Heart right ventricle (tissue), 16 donors: ENCODE measurements at regions of chr6 and their contacts with region 1.

Region 1: GRCh38 chr6:45486736-45487135 is 109.0 kb upstream of the SUPT3H start:
- DNase-seq: no peak
- ATAC-seq: no peak
- H3K4me3 ChIP-seq: no peak overlapping the region
- H3K27ac ChIP-seq: no peak overlapping the region
- H3K4me1 ChIP-seq: peaks cover 0 to 14% (median 0%) of the 10 kb centered on the region in 9 donors
- H3K27me3 ChIP-seq: no peaks in the 10 kb centered on the region
- CTCF ChIP-seq: no peak

Region 2: GRCh38 chr6:45502436-45502835 is 15.7 kb after region 1 on chr6:
- intact Hi-C with region 1: loop called in 1 of 10 experiments (anchors 2 kb)
- DNase-seq: no peak
- ATAC-seq: no peak
- H3K4me3 ChIP-seq: no peak overlapping the region
- H3K27ac ChIP-seq: no peak overlapping the region
- H3K4me1 ChIP-seq: peaks cover 0 to 16% (median 4%) of the 10 kb centered on the region in 9 donors
- H3K27me3 ChIP-seq: no peaks in the 10 kb centered on the region
- CTCF ChIP-seq: no peak

Region 3: GRCh38 chr6:46263707-46264086 is 777.0 kb after region 1 on chr6:
- intact Hi-C with region 1: no loop called
- DNase-seq: no peak
- ATAC-seq: peak in 4 of 8 donors; percentile 8 to 63 (median 46)
- H3K4me3 ChIP-seq: no peak overlapping the region
- H3K27ac ChIP-seq: peak overlapping the region in 4 of 10 donors; percentile 5 to 9 (median 6)
- H3K4me1 ChIP-seq: peaks cover 0 to 60% (median 29%) of the 10 kb centered on the region in 9 donors
- H3K27me3 ChIP-seq: no peaks in the 10 kb centered on the region
- CTCF ChIP-seq: no peak